Activated CD4-positive, alpha-beta memory T cell treated with anti-CD3 and anti-CD28 coated beads for 36 hours (primary cell): ENCODE measurements at regions of chr9 and their contacts with region 1.

Region 1: DNA sequence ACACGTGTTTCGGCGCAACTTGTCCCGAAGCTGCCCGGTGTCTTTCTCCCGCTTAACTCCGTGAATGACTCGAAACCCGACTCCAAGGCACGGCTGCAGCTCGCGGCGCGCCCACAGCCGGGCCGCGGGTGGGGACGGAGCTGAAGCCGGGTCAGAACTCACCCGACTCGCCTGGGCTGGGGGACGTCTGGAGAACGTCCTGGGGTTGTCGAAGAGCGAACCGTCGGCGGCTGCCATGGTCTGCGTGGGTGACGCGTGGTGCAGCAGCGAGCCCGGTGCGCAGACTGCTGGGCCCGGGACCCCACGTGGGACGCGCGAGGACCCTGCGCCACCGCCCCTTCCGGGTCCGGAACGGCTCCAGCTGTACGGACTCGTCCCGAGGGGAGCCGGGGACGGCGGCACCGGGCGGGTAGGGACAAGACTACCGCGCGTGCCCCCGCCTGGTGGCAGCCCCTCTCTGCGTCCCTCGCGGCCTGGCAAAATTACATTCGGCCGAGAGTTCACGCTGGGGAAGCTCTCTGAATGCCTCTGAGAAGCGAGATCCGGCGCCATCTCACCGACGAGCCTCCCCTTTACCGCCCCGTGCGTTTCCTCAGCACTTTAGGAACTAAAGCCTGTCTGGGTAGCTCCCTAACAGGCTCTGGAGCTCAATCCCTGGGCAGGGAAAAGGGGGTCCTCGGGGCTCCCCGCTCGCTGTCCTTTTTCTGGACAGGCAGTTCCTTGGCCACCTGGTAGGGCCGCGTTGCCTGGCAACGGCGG is at the start of gene DDX31:
- DNase-seq: peak; percentile 89
- H3K4me3 Mint-ChIP-seq: peak within 1 kb of the TSS; percentile 86
- H3K27ac Mint-ChIP-seq: peak within 1 kb of the TSS; percentile 87
- H3K4me1 Mint-ChIP-seq: peaks cover 44% of the 10 kb centered on the region
- H3K27me3 Mint-ChIP-seq: no peaks in the 10 kb centered on the region
- total RNA-seq, gene DDX31: 17.2 to 18.8 TPM

Region 2: GRCh38 chr9:131125128-131126058 is 1544.5 kb before region 1 on chr9 and contains the start of gene NUP214:
- CTCF ChIA-PET with region 1: no interaction called
- POLR2A ChIA-PET with region 1: no interaction called
- intact Hi-C with region 1: loop called (anchors 10 kb)
- DNase-seq: peak; percentile 100
- H3K4me3 Mint-ChIP-seq: peak within 1 kb of the TSS; percentile 100
- H3K27ac Mint-ChIP-seq: peak within 1 kb of the TSS; percentile 96
- H3K4me1 Mint-ChIP-seq: peaks cover 29% of the 10 kb centered on the region
- H3K27me3 Mint-ChIP-seq: no peaks in the 10 kb centered on the region
- total RNA-seq, gene NUP214: 45.5 to 49.9 TPM

Region 3: GRCh38 chr9:132447346-132447745 is 222.5 kb before region 1 on chr9:
- CTCF ChIA-PET with region 1: no interaction called
- POLR2A ChIA-PET with region 1: no interaction called
- intact Hi-C with region 1: no loop called
- DNase-seq: no peak
- H3K4me3 Mint-ChIP-seq: no peak overlapping the region
- H3K27ac Mint-ChIP-seq: no peak overlapping the region
- H3K4me1 Mint-ChIP-seq: peaks cover 4% of the 10 kb centered on the region
- H3K27me3 Mint-ChIP-seq: peaks cover 31% of the 10 kb centered on the region

Region 4: GRCh38 chr9:132584601-132585560 is 85.0 kb before region 1 on chr9:
- CTCF ChIA-PET with region 1: no interaction called
- POLR2A ChIA-PET with region 1: no interaction called
- intact Hi-C with region 1: no loop called
- DNase-seq: no peak
- H3K4me3 Mint-ChIP-seq: no peak overlapping the region
- H3K27ac Mint-ChIP-seq: no peak overlapping the region
- H3K4me1 Mint-ChIP-seq: peaks cover 8% of the 10 kb centered on the region
- H3K27me3 Mint-ChIP-seq: peaks cover 59% of the 10 kb centered on the region

Region 5: GRCh38 chr9:132609829-132610228 is 60.0 kb before region 1 on chr9:
- CTCF ChIA-PET with region 1: no interaction called
- POLR2A ChIA-PET with region 1: no interaction called
- intact Hi-C with region 1: no loop called
- DNase-seq: no peak
- H3K4me3 Mint-ChIP-seq: no peak overlapping the region
- H3K27ac Mint-ChIP-seq: no peak overlapping the region
- H3K4me1 Mint-ChIP-seq: no peaks in the 10 kb centered on the region
- H3K27me3 Mint-ChIP-seq: no peaks in the 10 kb centered on the region

Region 6: DNA sequence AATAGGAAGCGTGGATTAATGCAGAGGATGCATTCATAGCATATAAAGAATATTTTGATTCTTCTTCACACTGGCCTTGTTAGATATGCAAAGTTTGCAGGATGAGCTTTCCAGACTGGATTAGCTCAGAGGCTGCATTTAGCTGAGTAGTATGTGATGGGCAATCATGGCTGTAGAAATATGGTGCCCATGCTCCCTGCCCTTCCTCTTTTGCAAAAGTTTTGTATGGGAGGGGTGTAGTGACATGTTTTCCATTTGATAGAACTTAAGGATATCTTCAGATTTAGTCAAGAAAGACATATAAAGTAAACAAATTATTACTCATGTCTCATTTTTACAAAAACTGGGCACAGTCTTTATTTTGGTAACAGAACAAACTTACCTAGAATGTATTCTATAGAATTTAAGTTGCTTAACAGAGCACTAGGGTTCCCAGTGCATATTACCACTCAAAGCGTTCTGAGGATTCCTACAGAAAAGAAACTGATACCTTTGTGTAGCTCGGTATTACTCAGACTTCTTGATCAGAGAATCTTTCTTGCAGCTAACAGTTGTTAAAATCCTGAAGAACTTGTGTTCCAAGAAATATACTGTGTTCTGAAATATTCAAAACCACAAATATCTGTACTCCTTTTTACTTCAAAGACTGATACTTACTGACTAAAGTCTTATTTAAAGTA is 10.2 kb after region 1 on chr9:
- CTCF ChIA-PET with region 1: no interaction called
- POLR2A ChIA-PET with region 1: interaction called, 11 read pairs
- intact Hi-C with region 1: loop called (anchors 1 kb)
- DNase-seq: no peak
- H3K4me3 Mint-ChIP-seq: no peak overlapping the region
- H3K27ac Mint-ChIP-seq: peak overlapping the region; percentile 57
- H3K4me1 Mint-ChIP-seq: peaks cover 43% of the 10 kb centered on the region
- H3K27me3 Mint-ChIP-seq: no peaks in the 10 kb centered on the region